BJ (cell line): ENCODE measurements at regions of chr5 and their contacts with region 1.

Region 1: DNA sequence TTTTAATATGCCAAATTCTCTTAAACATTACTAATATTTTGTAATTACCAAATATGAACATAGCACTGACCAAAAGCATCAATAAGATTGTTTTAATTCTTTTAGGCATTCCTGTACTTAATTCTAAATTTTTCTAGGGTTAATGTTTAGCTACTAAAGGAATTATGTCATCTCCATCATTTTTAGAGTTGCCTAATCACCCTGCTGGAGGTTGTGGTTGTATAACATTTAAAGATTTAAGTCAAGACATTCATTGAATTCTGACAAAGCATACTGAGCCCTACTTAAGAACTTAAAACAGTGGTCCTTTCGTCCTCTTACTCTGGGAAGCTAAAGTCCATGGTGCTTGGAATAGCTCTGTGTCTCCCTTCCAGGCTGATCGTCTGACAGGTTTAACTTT is 28.1 kb upstream of the DAB2 start:
- DNase-seq: no peak
- H3K4me3 ChIP-seq: no peak overlapping the region
- H3K27me3 ChIP-seq: no peaks in the 10 kb centered on the region
- CTCF ChIP-seq: no peak

Region 2: DNA sequence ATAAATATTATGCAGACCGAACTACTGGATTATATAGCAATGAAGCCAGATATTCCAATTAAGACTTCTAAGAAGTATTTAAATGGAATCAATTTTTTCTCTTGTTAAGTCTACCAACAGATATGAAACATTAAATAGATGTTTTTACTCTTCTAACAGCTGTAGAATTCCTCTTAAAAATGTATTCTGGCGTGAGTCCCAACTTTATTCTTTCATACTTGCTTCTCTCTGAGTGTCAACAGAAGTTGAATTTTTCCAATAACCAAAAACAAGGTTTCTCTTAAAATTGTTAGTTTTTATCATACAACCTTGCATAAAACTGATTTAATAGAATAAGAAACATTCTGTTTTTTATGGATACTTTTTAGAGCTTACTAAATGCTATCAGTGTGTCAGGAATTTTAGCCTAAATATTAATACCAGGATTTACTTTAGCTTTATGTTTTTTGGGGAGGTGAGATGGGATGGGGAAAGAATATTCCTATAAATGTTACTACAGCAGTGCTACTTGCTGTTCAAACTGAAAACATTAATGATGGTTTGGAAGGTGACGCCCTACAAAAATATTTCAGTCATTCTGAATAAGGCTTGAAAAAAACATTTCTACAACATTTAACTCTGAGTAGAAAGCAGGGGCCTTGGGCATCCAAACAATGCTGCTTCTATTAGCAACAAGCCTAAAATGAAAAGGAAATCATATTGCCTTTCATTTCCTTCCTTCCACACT is 12.1 kb before region 1 on chr5:
- CTCF ChIA-PET with region 1: interaction called, 10 read pairs
- POLR2A ChIA-PET with region 1: no interaction called
- DNase-seq: no peak
- H3K4me3 ChIP-seq: no peak overlapping the region
- H3K27me3 ChIP-seq: no peaks in the 10 kb centered on the region
- CTCF ChIP-seq: no peak

Region 3: GRCh38 chr5:39503146-39503545 is 50.3 kb after region 1 on chr5:
- CTCF ChIA-PET with region 1: no interaction called
- POLR2A ChIA-PET with region 1: no interaction called
- DNase-seq: no peak
- H3K4me3 ChIP-seq: no peak overlapping the region
- H3K27me3 ChIP-seq: no peaks in the 10 kb centered on the region
- CTCF ChIP-seq: no peak

Region 4: DNA sequence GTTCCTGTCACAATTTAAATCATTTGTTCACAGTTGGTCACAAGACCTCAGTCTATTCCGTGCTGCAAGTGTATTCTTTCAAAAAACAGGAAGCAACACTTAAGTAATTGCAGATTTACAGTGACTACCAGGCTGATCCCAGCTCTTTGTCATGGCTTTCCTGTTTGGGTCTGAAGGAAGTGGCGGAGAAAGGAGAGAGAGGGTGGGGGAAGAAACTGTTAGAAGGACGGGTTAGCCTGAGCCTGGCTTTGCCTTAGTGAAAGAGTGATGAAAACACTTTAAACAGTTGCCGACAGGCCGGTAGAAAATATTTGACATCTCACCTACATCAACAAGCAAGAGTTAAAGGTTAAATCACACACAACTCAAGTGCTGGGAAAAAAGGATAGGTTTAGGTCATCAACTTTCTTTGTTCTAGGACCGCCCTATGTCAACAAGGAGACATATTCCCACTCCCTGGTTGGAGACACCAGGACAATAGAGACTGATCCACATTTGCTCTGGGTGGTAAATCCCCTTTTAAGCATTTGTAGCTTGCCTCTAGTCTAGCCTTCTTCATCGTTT is 74.2 kb after region 1 on chr5:
- CTCF ChIA-PET with region 1: no interaction called
- POLR2A ChIA-PET with region 1: no interaction called
- DNase-seq: no peak
- H3K4me3 ChIP-seq: no peak overlapping the region
- H3K27me3 ChIP-seq: no peaks in the 10 kb centered on the region
- CTCF ChIP-seq: no peak

Region 5: GRCh38 chr5:39599721-39600431 is 147.0 kb after region 1 on chr5:
- CTCF ChIA-PET with region 1: no interaction called
- POLR2A ChIA-PET with region 1: no interaction called
- DNase-seq: no peak
- H3K4me3 ChIP-seq: no peak overlapping the region
- H3K27me3 ChIP-seq: no peaks in the 10 kb centered on the region; the same call in 1 of the 2 replicates
- CTCF ChIP-seq: peak; percentile 34